Activated B cell treated with CpG ODN at 0.5 μM for 24 hours (primary cell): ENCODE measurements at regions of chr1 and their contacts with region 1.

Region 1: DNA sequence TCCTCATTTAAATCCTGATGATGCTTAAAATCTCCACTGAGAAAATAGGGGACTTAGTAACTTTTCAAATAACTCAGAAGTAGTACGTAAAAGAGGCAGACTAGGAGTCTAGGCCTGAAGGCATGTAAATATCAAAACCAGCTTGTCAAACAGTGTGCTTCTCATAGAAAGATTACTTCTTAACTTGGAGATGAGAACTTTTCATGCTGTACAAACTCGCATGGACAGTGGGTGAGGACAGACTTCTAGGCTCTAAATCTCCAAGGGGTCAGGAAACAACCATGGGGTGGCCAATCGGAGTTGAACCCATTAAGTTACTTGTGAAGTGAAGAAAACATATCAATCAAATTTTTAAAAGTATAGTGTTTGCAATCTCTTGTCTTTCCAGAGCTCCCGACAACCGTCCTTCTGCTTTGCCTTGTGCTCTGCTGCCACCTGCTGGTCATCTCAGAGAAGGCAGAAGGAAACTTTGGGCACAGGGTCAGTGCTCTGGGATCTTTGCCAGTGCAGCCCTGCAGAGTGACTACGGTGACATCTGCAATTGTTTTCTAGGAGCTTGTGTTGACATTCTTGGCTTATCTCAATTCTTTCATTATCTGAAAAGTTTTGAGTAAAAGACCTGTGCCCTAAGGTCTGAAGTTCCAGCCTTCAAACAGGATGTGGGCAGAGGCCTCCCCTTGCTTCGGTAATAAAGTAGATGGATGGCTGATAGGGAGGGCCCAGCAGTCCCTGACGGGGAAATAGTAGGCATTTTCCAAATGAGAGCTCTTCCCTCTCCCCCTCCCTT is 105.1 kb upstream of the PDE4B start:
- DNase-seq: peak; percentile 54
- ATAC-seq: peak; percentile 81
- H3K4me3 Mint-ChIP-seq: no peak overlapping the region
- H3K27ac Mint-ChIP-seq: no peak overlapping the region
- H3K4me1 Mint-ChIP-seq: no peaks in the 10 kb centered on the region
- H3K27me3 Mint-ChIP-seq: peaks cover 8% of the 10 kb centered on the region
- CTCF ChIP-seq: peak; percentile 64

Region 2: GRCh38 chr1:65059930-65060538 is 627.6 kb before region 1 on chr1:
- CTCF ChIA-PET with region 1: interaction called, 9 read pairs
- POLR2A ChIA-PET with region 1: no interaction called
- intact Hi-C with region 1: loop called (anchors 1 kb)
- DNase-seq: no peak
- ATAC-seq: peak; percentile 42
- H3K4me3 Mint-ChIP-seq: no peak overlapping the region
- H3K27ac Mint-ChIP-seq: peak overlapping the region; percentile 15
- H3K4me1 Mint-ChIP-seq: peaks cover 42% of the 10 kb centered on the region
- H3K27me3 Mint-ChIP-seq: no peaks in the 10 kb centered on the region
- CTCF ChIP-seq: no peak

Region 3: DNA sequence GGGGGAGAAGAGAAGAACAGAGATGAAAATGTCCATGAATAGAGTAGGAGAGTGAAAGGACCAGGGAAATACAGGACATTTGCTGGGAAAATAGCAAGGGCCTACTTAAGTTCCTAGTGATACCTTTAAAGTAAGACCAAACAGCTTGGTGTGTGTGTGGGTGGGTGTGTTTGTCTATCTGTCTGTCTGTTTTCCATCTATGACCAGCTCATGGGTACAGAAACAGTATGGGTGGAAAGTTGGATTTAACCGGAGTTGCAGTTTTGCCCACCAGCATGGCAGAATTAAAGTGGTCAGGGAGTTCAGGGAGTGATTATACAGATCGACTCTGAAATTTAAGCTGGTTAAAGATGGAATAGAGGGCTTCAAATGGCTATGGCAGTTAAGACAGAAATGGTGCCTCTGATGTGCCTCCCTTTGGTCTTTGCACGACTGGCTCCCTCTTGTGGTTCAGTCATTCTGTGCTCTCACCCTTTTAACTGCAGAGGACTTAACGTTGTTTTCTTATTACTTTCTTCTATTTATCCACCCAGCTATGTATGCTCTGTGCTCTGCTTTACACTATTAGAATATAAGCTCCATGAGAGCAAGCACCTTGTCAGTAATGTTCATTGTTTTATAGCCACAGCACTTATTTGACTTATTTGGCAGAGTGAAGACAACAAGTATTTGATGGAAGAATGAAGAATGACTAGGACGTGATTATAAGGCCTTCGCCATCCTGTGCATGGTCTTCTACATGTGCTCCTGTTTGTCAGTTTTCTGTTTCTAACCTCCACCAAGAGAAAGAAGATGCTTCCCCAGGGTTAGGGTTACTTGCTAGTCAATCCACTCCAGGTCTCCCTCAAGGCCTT is 612.3 kb before region 1 on chr1:
- CTCF ChIA-PET with region 1: interaction called, 8 read pairs
- POLR2A ChIA-PET with region 1: no interaction called
- intact Hi-C with region 1: loop called (anchors 1 kb)
- DNase-seq: no peak
- ATAC-seq: peak; percentile 94
- H3K4me3 Mint-ChIP-seq: no peak overlapping the region
- H3K27ac Mint-ChIP-seq: no peak overlapping the region
- H3K4me1 Mint-ChIP-seq: no peaks in the 10 kb centered on the region
- H3K27me3 Mint-ChIP-seq: peaks cover 5% of the 10 kb centered on the region
- CTCF ChIP-seq: peak; percentile 51

Region 4: GRCh38 chr1:65214340-65215027 is 473.1 kb before region 1 on chr1:
- CTCF ChIA-PET with region 1: interaction called, 16 read pairs
- POLR2A ChIA-PET with region 1: no interaction called
- intact Hi-C with region 1: loop called (anchors 1 kb)
- DNase-seq: no peak
- ATAC-seq: no peak
- H3K4me3 Mint-ChIP-seq: no peak overlapping the region
- H3K27ac Mint-ChIP-seq: no peak overlapping the region
- H3K4me1 Mint-ChIP-seq: peaks cover 5% of the 10 kb centered on the region
- H3K27me3 Mint-ChIP-seq: peaks cover 1% of the 10 kb centered on the region
- CTCF ChIP-seq: no peak

Region 5: DNA sequence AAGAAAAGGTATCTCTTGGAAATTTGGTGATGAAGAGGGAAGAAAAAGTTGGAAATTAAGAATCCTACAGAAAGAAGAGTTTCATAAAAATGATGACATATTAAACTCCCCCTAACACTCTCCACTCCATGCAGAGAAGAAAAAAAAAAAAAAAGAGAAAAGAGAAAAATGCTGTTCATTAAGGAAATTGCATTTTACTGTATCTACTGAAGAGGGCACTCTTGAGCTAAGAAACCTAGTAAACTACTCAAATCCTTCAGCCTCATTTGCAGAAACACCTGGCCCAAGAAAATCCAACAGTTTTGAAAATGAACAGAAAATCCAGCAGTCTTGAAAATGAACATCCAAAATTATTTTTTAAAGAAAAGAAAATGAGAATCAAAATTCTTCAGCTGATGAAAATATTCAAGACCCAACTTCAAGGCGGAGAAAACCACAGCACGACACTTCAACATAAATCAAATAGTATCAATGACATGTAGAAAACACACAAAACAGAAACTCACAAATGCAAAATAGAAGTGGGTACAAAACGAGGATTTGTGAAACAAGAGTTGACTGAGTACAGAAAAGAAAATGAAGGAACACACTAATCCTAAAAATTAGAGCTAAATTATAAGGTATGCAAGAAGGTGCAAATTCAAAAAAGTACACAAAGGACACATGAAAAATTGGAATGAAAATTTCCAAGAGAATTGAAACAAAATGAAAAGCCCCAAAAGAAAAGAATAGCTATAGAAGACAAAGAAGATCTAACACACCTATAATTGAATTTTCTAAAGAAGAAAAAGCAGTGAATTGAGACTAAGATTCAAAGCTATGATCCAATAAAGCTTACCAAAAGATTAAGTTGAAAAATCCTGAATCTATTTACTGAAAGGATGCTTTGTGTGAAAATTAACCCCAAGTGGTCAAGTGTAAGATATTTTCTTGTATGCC is 451.5 kb before region 1 on chr1:
- CTCF ChIA-PET with region 1: interaction called, 10 read pairs
- POLR2A ChIA-PET with region 1: no interaction called
- intact Hi-C with region 1: loop called (anchors 1 kb)
- DNase-seq: no peak
- ATAC-seq: no peak
- H3K4me3 Mint-ChIP-seq: no peak overlapping the region
- H3K27ac Mint-ChIP-seq: no peak overlapping the region
- H3K4me1 Mint-ChIP-seq: no peaks in the 10 kb centered on the region
- H3K27me3 Mint-ChIP-seq: peaks cover 9% of the 10 kb centered on the region
- CTCF ChIP-seq: no peak

Region 6: GRCh38 chr1:65431111-65431705 is 256.4 kb before region 1 on chr1:
- CTCF ChIA-PET with region 1: interaction called, 18 read pairs
- POLR2A ChIA-PET with region 1: no interaction called
- intact Hi-C with region 1: loop called (anchors 1 kb)
- DNase-seq: no peak
- ATAC-seq: no peak
- H3K4me3 Mint-ChIP-seq: no peak overlapping the region
- H3K27ac Mint-ChIP-seq: no peak overlapping the region
- H3K4me1 Mint-ChIP-seq: no peaks in the 10 kb centered on the region
- H3K27me3 Mint-ChIP-seq: no peaks in the 10 kb centered on the region
- CTCF ChIP-seq: no peak